ENCODE measurements at regions of chr1 and their contacts with region 1.

Region 1: GRCh38 chr1:12619792-12620487 is 1.9 kb upstream of the DHRS3 start:
- DNase-seq: peak; percentile 58 to 84 (median 75)
- ATAC-seq: peak; percentile 26 to 27
- H3K4me3 Mint-ChIP-seq: peak overlapping the region; percentile 96 to 100 (median 99)
- H3K27ac Mint-ChIP-seq: peak overlapping the region in 9 of 10 donors; percentile 26 to 97 (median 82)
- H3K4me1 Mint-ChIP-seq: peaks cover 21 to 52% (median 41%) of the 10 kb centered on the region in 4 donors
- H3K27me3 Mint-ChIP-seq: peaks cover 0 to 7% (median 0%) of the 10 kb centered on the region in 5 donors

Region 2: DNA sequence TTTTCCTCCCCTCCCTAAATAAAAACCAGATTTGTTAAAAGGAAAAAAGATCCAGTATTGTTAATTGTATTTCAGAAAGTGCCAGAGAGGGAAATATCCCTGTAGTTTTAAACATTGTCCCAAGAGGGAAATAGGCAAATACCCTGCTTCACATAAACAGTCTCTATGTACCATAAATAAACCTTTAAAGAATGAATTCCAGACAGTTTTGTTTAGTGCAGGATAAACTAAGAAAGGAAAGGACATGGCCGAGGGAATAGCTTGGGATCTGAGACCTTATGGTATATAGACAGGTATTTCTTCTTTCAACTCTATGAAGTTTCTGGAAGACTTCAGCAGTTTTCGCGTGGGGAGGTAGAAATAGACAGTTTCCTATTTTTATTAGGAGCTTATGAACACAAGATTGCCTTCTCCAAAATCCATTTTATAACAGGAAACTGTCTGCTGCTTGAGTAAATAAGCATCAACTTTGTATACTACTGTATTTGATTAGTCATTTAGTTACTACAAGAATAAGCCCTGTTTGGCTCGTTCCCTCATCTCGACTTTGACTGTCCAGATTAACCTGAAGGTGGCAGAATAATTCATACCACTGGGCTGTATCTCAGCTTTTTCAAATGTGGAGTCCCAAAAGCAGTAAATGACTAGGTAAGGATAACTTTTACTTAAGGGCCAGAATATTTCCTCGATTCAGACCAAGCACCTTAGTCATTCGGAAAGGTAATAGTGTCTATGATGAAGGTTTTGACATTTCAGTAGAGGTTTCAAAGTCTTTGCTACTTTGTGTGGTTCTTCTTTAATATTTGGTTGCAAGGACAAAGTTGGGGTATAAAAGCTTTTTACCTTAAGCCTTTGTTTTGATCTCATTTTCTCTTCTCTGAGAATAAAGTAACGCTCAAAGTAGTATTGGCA is 212.6 kb before region 1 on chr1:
- POLR2A ChIA-PET with region 1: interaction called, 19 read pairs
- DNase-seq: peak in 6 of 10 donors; percentile 8 to 53 (median 28)
- ATAC-seq: peak; percentile 57 to 75
- H3K4me3 Mint-ChIP-seq: no peak overlapping the region
- H3K27ac Mint-ChIP-seq: peak overlapping the region in 5 of 10 donors; percentile 15 to 54 (median 38)
- H3K4me1 Mint-ChIP-seq: peaks cover 6 to 29% (median 20%) of the 10 kb centered on the region in 4 donors
- H3K27me3 Mint-ChIP-seq: no peaks in the 10 kb centered on the region

Region 3: DNA sequence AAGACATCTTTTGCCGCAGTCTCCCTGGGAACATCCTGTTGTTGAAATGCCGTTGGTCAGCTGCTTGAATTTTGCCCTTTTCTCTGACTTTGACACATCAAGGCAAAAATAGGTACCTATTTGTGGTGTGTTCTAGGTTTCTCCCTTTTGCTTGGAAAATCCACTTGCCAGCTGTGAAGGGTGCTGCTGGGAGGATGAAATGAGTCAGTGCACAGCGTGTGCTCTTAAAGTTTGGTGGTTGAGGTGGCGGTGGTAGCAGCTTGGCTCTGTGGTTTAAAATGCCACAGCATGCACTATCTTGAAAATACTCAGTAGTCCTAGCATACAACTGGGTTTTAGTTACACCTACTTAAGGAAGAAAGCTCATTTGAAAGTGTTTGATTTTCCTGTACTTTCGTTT is 185.8 kb before region 1 on chr1:
- POLR2A ChIA-PET with region 1: interaction called, 11 read pairs
- DNase-seq: peak in 6 of 10 donors; percentile 25 to 42 (median 32)
- ATAC-seq: peak; percentile 71 to 73
- H3K4me3 Mint-ChIP-seq: peak overlapping the region; percentile 2 to 81 (median 74)
- H3K27ac Mint-ChIP-seq: peak overlapping the region; percentile 68 to 98 (median 88)
- H3K4me1 Mint-ChIP-seq: peaks cover 41 to 85% (median 81%) of the 10 kb centered on the region in 4 donors
- H3K27me3 Mint-ChIP-seq: no peaks in the 10 kb centered on the region

Region 4: GRCh38 chr1:12448746-12449177 is 171.2 kb before region 1 on chr1:
- POLR2A ChIA-PET with region 1: interaction called, 11 read pairs
- DNase-seq: no peak
- ATAC-seq: no peak
- H3K4me3 Mint-ChIP-seq: peak overlapping the region in 9 of 10 donors; percentile 76 to 88 (median 84)
- H3K27ac Mint-ChIP-seq: peak overlapping the region; percentile 60 to 100 (median 94)
- H3K4me1 Mint-ChIP-seq: peaks cover 41 to 87% (median 80%) of the 10 kb centered on the region in 4 donors
- H3K27me3 Mint-ChIP-seq: no peaks in the 10 kb centered on the region

Region 5: DNA sequence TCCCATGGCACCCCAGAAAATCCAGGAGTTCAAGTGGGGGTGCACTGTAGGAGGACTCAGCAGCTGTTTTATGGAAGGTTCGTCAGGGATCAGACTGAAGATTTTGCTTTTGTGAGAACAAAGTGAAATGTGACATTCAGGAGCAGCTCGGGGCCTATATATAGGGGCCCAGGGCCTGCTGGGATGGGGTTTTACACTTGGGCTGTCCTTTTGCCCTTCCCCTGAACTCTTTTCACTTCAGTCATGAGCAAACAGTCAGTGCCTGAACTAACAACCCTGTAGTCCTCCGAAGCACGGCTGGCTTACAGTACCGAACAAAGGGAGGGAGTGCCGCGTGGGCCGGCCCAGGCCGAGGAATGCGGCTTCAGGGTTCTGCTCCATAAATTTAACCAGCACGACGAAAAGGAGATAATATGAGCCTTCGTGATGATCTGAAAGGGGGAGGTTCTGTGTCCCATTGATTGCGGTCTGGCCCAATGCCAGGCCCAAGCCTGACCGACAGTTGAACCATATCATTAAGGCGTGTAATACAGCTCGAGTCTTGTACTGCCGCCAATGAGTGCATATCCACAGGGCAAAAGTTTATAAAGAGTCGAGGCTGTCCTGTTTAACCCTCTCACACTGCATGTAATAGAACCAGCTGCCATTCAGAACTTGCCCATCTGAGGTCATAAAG is 141.9 kb before region 1 on chr1:
- POLR2A ChIA-PET with region 1: interaction called, 10 read pairs
- DNase-seq: peak in 6 of 10 donors; percentile 10 to 66 (median 25)
- ATAC-seq: peak; percentile 27 to 36
- H3K4me3 Mint-ChIP-seq: peak overlapping the region; percentile 60 to 85 (median 80)
- H3K27ac Mint-ChIP-seq: peak overlapping the region; percentile 92 to 97 (median 95)
- H3K4me1 Mint-ChIP-seq: peaks cover 43 to 95% (median 93%) of the 10 kb centered on the region in 4 donors
- H3K27me3 Mint-ChIP-seq: no peaks in the 10 kb centered on the region

Region 6: DNA sequence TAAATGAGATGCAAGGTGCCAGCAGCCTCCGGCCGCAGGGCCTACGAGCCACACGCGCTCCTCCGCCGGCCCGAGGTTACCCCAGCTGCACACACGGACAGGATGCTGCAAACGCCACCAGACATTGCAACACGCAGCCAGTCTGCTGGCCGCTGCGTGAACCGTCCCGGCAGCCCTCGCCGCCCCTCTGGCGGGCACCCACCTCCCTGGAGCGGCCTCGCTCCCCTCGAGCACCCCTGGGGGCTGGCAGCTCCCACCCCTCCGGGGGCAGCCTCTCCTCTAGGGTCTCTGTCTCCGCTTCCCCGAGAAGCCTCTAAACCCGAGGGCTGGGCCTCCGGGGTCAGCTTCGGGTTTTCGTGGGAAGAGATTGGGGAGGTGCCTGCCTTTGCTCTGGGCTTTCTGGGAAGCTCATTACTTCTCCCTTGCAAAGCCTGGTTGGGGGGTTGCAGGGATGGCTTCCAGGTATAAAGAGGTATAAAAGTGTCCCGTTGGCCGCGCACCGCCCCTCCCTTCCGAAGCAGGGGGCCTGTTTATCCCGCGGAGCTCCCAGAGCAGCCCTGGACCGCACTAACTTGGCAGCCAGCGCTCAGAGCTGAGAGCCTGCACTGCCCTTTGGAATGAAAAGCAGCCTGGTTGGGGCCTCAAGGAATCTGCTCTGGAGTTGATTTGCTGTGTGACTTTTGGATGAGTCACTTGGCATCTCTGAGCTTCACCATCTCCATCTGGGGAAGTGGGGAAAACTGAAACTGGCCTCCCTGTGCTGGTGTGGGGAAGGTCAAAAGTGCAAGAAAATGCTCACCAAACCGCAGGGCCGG is 23.7 kb before region 1 on chr1:
- POLR2A ChIA-PET with region 1: interaction called, 269 read pairs
- DNase-seq: peak in 2 of 10 donors; percentile 10 to 27
- ATAC-seq: peak; percentile 24 to 41
- H3K4me3 Mint-ChIP-seq: peak overlapping the region; percentile 18 to 86 (median 61)
- H3K27ac Mint-ChIP-seq: peak overlapping the region in 9 of 10 donors; percentile 4 to 86 (median 34)
- H3K4me1 Mint-ChIP-seq: peaks cover 31 to 74% (median 68%) of the 10 kb centered on the region in 4 donors
- H3K27me3 Mint-ChIP-seq: no peaks in the 10 kb centered on the region

Region 7: DNA sequence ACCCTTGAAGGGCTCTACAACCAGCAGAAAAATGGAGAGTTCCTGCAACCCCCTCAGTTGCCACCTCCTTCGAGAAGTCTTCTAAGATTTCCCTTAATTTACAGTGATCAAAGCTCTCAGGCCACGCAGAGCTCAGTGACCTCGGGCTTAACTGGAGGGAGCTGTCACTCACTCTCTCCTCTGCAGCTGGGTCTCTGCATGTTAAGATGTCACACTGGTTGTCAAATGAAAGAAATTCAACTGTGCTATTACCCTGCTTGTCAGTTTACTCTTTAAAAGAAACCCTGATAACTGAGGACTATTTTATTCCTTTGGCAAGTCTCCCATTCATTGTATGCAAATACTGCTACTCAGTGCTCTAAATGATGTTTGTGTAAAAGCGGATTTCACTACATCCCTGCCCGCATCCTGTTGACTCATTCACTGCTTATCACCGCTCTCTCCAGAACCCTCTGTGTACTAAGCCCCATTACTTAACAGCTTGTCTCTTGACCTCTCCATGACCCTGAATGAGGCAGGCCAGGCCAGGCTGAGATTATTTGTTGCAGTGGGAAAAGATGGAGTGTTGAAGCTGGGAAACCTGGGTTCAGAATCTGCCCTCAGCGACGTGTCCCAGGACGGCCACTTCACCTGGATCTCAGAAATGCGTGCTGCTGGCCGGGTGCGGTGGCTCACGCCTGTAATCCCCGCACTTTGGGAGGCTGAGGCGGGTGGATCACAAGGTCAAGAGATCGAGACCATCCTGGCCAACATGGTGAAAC is 15.6 kb before region 1 on chr1:
- POLR2A ChIA-PET with region 1: interaction called, 269 read pairs
- DNase-seq: peak; percentile 13 to 76 (median 48)
- ATAC-seq: peak; percentile 92 to 96
- H3K4me3 Mint-ChIP-seq: peak overlapping the region; percentile 20 to 83 (median 59)
- H3K27ac Mint-ChIP-seq: peak overlapping the region; percentile 78 to 95 (median 83)
- H3K4me1 Mint-ChIP-seq: peaks cover 23 to 84% (median 64%) of the 10 kb centered on the region in 4 donors
- H3K27me3 Mint-ChIP-seq: no peaks in the 10 kb centered on the region

Measured in naive thymus-derived CD8-positive, alpha-beta T cell (primary cell).